Naive thymus-derived CD4-positive, alpha-beta T cell (primary cell): ENCODE measurements at regions of chr7 and their contacts with region 1.

Region 1: DNA sequence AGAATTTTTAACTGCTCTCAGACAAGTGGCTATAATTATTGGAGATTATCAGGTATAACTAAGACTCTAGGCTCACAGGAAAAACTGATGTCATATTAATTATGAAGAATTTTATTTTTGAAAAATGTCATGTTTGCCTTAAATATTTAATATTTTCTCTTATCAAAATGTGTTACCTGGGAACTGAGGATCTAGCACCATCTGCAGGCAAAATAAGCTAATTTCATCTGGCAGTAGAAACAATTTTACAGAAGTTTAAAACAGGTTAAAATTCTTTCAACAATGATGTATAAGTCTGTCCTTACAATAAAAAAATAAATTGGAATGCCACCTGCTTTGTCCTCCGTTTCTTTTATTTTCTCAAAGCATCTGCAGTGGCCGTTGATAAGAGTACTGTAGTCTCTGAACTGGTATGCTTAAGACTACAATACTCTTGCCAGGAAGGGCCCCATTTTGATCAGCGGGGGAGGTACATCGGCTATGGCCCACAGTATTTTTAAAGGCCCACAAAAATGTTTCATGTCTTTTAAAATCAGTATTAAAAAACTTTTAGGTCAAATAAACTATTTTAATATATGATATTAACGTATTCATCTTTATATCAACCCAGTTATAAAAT is 81.3 kb downstream of the VWDE start:
- DNase-seq: peak in 7 of 9 donors; percentile 5 to 53 (median 47)
- ATAC-seq: no peak
- H3K4me3 ChIP-seq: no peak overlapping the region
- H3K4me3 Mint-ChIP-seq: no peak overlapping the region
- H3K27ac ChIP-seq: no peak overlapping the region
- H3K27ac Mint-ChIP-seq: no peak overlapping the region
- H3K4me1 ChIP-seq: no peaks in the 10 kb centered on the region
- H3K4me1 Mint-ChIP-seq: peaks cover 0 to 4% (median 0%) of the 10 kb centered on the region in 7 donors
- H3K27me3 ChIP-seq: no peaks in the 10 kb centered on the region
- H3K27me3 Mint-ChIP-seq: peaks cover 0 to 4% (median 0%) of the 10 kb centered on the region in 5 donors

Region 2: DNA sequence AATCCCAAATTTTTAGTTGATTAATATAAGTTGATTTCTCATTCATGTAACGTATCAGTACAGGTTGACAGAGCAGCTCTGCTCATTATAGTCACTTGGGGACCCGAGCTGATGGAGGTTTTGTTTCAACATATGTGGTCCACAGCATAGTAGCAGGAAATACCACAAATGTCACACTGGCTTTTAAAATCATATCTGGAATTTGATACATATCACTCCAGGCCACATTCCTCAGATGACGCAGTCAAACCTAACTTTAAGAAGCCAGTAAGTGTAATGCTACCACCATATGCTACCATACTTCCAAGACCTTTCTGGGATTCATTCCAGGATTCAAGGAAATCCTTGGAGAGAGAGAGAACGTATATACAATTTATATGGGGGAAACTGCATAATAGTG is 1192.4 kb before region 1 on chr7:
- CTCF ChIA-PET with region 1: no interaction called
- POLR2A ChIA-PET with region 1: no interaction called
- intact Hi-C with region 1: no loop called
- DNase-seq: no peak
- ATAC-seq: no peak
- H3K4me3 ChIP-seq: no peak overlapping the region
- H3K4me3 Mint-ChIP-seq: no peak overlapping the region
- H3K27ac ChIP-seq: no peak overlapping the region
- H3K27ac Mint-ChIP-seq: no peak overlapping the region
- H3K4me1 ChIP-seq: peaks cover 0 to 4% of the 10 kb centered on the region in 2 donors
- H3K4me1 Mint-ChIP-seq: peaks cover 19 to 35% (median 27%) of the 10 kb centered on the region in 7 donors
- H3K27me3 ChIP-seq: no peaks in the 10 kb centered on the region
- H3K27me3 Mint-ChIP-seq: no peaks in the 10 kb centered on the region

Region 3: GRCh38 chr7:11427686-11428273 is 894.6 kb before region 1 on chr7:
- CTCF ChIA-PET with region 1: interaction called, 4 read pairs
- POLR2A ChIA-PET with region 1: no interaction called
- intact Hi-C with region 1: loop called in 1 of 2 experiments (anchors 5 kb)
- DNase-seq: peak in 4 of 9 donors; percentile 1 to 12 (median 4)
- ATAC-seq: no peak
- H3K4me3 ChIP-seq: no peak overlapping the region
- H3K4me3 Mint-ChIP-seq: no peak overlapping the region
- H3K27ac ChIP-seq: no peak overlapping the region
- H3K27ac Mint-ChIP-seq: no peak overlapping the region
- H3K4me1 ChIP-seq: no peaks in the 10 kb centered on the region
- H3K4me1 Mint-ChIP-seq: no peaks in the 10 kb centered on the region
- H3K27me3 ChIP-seq: no peaks in the 10 kb centered on the region
- H3K27me3 Mint-ChIP-seq: peaks cover 0 to 5% (median 3%) of the 10 kb centered on the region in 5 donors

Region 4: GRCh38 chr7:11726794-11727155 is 595.6 kb before region 1 on chr7:
- CTCF ChIA-PET with region 1: no interaction called
- POLR2A ChIA-PET with region 1: no interaction called
- intact Hi-C with region 1: no loop called
- DNase-seq: no peak
- ATAC-seq: no peak
- H3K4me3 ChIP-seq: no peak overlapping the region
- H3K4me3 Mint-ChIP-seq: no peak overlapping the region
- H3K27ac ChIP-seq: no peak overlapping the region
- H3K27ac Mint-ChIP-seq: no peak overlapping the region
- H3K4me1 ChIP-seq: no peaks in the 10 kb centered on the region
- H3K4me1 Mint-ChIP-seq: no peaks in the 10 kb centered on the region
- H3K27me3 ChIP-seq: no peaks in the 10 kb centered on the region
- H3K27me3 Mint-ChIP-seq: no peaks in the 10 kb centered on the region

Region 5: GRCh38 chr7:12067141-12067831 is 255.1 kb before region 1 on chr7:
- CTCF ChIA-PET with region 1: interaction called, 20 read pairs
- POLR2A ChIA-PET with region 1: no interaction called
- intact Hi-C with region 1: loop called (anchors 1 kb)
- DNase-seq: peak; percentile 15 to 69 (median 58)
- ATAC-seq: peak; percentile 72
- H3K4me3 ChIP-seq: no peak overlapping the region
- H3K4me3 Mint-ChIP-seq: no peak overlapping the region
- H3K27ac ChIP-seq: no peak overlapping the region
- H3K27ac Mint-ChIP-seq: peak overlapping the region in 1 of 9 donors; percentile 73
- H3K4me1 ChIP-seq: no peaks in the 10 kb centered on the region
- H3K4me1 Mint-ChIP-seq: peaks cover 0 to 5% (median 0%) of the 10 kb centered on the region in 7 donors
- H3K27me3 ChIP-seq: no peaks in the 10 kb centered on the region
- H3K27me3 Mint-ChIP-seq: no peaks in the 10 kb centered on the region

Region 6: DNA sequence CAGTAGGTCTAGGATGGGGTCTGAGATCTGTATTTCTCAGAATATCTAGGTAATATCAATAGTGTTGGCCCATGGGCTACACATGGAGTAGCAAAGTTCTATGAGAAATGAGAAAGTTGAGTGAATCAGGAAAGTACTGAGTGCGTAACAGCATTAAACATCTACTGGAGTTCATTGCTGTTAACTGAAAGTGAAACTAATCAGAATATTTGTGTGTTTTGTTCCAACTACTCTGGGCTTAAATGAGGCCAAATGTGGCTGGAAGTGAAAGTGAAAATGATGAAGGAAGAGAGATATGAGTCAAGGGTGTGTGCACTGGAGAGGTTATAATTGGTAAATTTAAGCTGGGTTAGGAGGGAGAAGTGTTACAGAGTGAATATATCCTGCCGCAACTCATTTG is 64.8 kb before region 1 on chr7:
- CTCF ChIA-PET with region 1: no interaction called
- POLR2A ChIA-PET with region 1: no interaction called
- intact Hi-C with region 1: loop called in 1 of 2 experiments (anchors 5 kb)
- DNase-seq: peak in 8 of 9 donors; percentile 31 to 80 (median 72)
- ATAC-seq: peak; percentile 97
- H3K4me3 ChIP-seq: peak overlapping the region; percentile 26
- H3K4me3 Mint-ChIP-seq: no peak overlapping the region
- H3K27ac ChIP-seq: peak overlapping the region; percentile 28
- H3K27ac Mint-ChIP-seq: no peak overlapping the region
- H3K4me1 ChIP-seq: peaks cover 23% of the 10 kb centered on the region in 2 donors
- H3K4me1 Mint-ChIP-seq: peaks cover 0 to 12% (median 9%) of the 10 kb centered on the region in 7 donors
- H3K27me3 ChIP-seq: no peaks in the 10 kb centered on the region
- H3K27me3 Mint-ChIP-seq: peaks cover 0 to 3% (median 0%) of the 10 kb centered on the region in 5 donors